GM10248 (cell line): ENCODE measurements at regions of chr1 and their contacts with region 1.

Region 1: GRCh38 chr1:109248797-109249642 is at the start of gene CELSR2:
- DNase-seq: peak; percentile 88
- CTCF ChIP-seq: no peak

Region 2: GRCh38 chr1:109231066-109231465 is 18.0 kb before region 1 on chr1:
- CTCF ChIA-PET with region 1: no interaction called
- POLR2A ChIA-PET with region 1: no interaction called
- DNase-seq: no peak
- CTCF ChIP-seq: no peak

Region 3: DNA sequence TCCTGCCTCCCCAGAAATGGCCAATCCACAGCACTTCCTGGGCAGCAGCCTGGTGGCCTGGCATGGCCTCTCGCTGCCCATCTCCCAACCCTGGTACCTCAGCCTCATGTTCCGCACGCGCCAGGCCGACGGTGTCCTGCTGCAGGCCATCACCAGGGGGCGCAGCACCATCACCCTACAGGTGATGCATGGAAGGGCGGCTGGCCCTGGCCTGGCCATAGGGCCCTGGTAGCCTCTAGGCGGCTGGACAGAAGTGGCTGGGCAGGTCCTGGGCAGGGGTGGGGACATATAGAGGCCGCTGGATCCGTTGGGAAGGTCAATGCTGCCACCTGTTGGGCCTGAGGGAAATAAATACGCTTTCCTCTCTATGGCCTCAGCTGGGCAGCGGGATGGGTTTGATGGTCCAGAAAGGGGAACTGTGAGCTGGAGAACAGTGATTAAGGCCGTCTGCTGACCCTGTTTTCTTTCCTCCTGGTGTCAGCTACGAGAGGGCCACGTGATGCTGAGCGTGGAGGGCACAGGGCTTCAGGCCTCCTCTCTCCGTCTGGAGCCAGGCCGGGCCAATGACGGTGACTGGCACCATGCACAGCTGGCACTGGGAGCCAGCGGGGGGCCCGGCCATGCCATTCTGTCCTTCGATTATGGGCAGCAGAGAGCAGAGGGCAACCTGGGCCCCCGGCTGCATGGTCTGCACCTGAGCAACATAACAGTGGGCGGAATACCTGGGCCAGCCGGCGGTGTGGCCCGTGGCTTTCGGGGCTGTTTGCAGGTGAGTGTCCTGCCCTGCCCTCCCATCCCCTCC is 14.8 kb after region 1 on chr1:
- CTCF ChIA-PET with region 1: interaction called, 26 read pairs
- POLR2A ChIA-PET with region 1: no interaction called
- DNase-seq: peak; percentile 85
- CTCF ChIP-seq: peak; percentile 89

Region 4: DNA sequence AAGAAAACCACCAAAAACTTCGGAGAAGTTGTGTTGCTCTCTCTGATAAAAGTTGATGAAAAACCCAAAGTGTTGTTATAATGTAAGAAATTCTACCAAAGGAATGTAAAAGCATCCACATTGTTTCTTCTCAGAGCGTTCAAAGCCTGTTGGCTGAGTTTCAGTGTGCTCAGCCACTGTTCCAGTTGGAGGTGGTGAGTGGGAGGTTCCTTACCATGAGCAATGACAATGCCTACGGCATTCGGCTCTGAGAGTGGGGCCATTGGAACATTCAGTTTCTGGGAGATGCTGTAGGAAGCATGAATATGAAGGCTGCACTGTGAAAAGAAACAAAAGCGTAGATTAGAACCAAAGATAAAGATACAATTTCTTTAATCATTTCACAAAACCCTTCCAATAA is 78.3 kb after region 1 on chr1:
- CTCF ChIA-PET with region 1: no interaction called
- POLR2A ChIA-PET with region 1: no interaction called
- DNase-seq: no peak
- CTCF ChIP-seq: no peak

Region 5: DNA sequence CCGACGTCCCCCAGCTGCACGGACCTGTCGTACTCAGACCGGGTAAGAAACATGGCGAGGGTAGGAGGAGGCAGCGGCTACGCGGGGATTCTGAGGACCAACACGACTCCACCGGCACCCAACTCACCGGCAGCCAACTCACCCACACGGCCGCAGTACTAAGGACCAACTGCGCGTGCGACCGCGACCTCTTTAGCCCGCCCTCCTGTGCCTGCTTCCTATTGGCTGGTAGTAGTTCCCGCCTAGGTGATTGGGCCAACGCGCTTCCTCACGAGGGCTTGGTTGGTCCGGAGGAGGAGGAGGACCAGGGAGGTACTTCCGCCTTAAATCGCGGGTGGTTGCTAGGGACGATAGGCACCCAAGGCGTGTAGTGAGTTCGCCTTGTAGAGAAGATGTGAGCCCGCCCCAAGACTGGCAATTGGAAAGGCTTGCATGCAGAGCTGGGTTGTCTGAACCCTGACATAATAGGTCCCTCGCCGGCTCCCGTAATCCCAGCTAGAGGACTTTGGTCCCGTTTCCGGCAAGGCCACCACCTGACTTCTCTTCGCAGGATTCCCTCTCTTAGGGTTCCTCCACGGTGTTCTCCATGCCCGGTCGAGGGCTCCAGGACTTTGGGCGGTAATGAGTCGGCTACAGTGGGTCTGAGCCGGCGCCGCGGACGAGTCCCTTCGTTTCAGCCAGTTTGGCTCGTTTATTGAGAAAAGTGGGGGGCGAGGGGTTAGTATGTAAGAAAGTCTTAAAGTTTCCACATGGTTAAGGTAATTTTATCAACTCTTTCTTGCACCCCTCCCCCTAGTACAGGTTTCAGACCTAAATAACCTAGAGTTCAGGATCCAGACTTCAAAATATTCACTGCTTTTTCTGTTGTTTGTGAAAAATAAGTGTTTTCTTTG is 177.5 kb after region 1 on chr1 and contains the start of gene PSMA5:
- CTCF ChIA-PET with region 1: no interaction called
- POLR2A ChIA-PET with region 1: no interaction called
- DNase-seq: peak; percentile 95
- CTCF ChIP-seq: no peak

Region 6: GRCh38 chr1:109483672-109484518 is 234.9 kb after region 1 on chr1 and contains the start of gene ATXN7L2:
- CTCF ChIA-PET with region 1: no interaction called
- POLR2A ChIA-PET with region 1: no interaction called
- DNase-seq: peak; percentile 99
- CTCF ChIP-seq: no peak